ENCODE measurements at regions of chr14 and their contacts with region 1.

Region 1: DNA sequence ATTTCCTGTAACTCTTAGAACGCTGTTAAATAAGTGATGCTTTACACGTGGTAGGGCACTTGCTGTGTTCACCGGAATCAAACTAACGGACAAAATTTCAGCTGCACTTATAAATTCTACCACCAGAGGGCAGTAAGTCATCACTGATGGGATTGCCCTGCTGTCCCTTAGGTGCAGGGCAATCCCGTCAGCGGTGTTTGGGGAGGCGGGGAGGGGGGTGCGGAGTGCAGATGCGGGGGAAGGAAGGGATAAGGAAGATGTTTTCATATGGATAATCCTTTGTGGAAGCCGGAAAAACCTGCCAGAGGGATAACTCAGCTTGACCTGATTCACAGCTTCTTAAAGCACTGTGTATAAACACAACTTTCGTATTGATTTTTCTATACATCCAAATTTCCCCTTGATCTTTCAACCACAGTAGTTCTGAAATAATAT is 21.7 kb upstream of the SLC10A1 start:
- DNase-seq: peak; percentile 40
- H3K4me3 ChIP-seq: no peak overlapping the region
- H3K27ac ChIP-seq: no peak overlapping the region
- H3K4me1 ChIP-seq: no peaks in the 10 kb centered on the region
- H3K27me3 ChIP-seq: peaks cover 3% of the 10 kb centered on the region
- CTCF ChIP-seq: peak; percentile 79 to 97 (median 86)
- POLR2A ChIP-seq: no peak

Region 2: DNA sequence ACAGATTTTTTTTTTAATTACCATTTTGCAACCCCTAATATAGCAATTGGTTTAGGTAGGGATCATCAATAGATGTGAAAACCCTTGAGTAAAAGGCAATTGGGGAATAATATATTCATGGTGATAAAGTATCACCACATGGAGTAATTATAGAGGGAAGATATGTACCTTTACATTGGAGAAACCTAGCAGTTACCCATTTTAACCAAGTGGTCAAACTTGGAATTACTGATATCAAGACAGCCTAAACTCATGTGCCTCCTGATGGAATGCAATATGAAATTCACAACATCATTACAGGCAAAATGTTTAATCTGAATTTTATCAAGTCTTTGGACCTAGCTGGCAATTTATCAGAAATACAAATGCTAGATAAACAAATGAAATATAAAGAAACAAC is 15.0 kb before region 1 on chr14:
- intact Hi-C with region 1: no loop called
- DNase-seq: no peak
- H3K4me3 ChIP-seq: no peak overlapping the region
- H3K27ac ChIP-seq: no peak overlapping the region
- H3K4me1 ChIP-seq: no peaks in the 10 kb centered on the region
- H3K27me3 ChIP-seq: no peaks in the 10 kb centered on the region
- CTCF ChIP-seq: no peak
- POLR2A ChIP-seq: no peak

Region 3: GRCh38 chr14:69996216-69996615 is 177.4 kb after region 1 on chr14:
- intact Hi-C with region 1: no loop called
- DNase-seq: no peak
- H3K4me3 ChIP-seq: no peak overlapping the region
- H3K27ac ChIP-seq: no peak overlapping the region
- H3K4me1 ChIP-seq: no peaks in the 10 kb centered on the region
- H3K27me3 ChIP-seq: no peaks in the 10 kb centered on the region
- CTCF ChIP-seq: no peak
- POLR2A ChIP-seq: no peak

Region 4: DNA sequence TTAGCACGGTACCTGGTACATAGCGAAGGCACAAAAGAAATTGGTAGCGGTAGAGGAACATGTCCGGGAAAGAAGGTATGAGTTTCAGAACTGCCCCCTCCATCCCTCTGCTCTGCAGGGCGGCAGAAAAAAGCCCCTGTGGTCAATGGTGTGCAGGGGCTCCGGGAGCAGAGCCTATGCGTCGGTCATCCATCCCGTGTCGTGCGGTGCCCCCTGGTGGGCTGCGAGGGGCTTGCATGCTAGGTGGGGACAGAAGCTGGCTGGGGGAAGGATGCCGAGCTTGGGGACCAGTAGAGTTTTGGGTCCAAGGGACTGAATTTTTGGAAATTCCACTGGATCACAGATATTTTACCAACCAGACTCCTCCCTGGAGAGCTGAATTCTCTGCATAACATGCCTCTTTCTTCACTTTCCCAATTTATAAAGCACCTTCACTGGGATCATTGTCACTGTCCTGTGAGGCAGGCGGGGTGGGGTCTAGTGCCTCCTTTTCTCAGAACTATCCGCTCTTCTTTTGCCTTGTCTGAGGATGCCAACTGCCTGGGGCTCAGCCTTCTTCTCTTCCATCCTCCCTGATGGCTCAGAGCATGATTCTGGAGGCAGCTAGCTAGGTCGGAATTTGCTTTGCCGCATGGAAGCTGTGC is 209.1 kb after region 1 on chr14:
- intact Hi-C with region 1: loop called (anchors 2 kb)
- DNase-seq: peak; percentile 46
- H3K4me3 ChIP-seq: no peak overlapping the region
- H3K27ac ChIP-seq: no peak overlapping the region
- H3K4me1 ChIP-seq: no peaks in the 10 kb centered on the region
- H3K27me3 ChIP-seq: no peaks in the 10 kb centered on the region
- CTCF ChIP-seq: peak; percentile 87 to 93 (median 88)
- POLR2A ChIP-seq: no peak

Region 5: DNA sequence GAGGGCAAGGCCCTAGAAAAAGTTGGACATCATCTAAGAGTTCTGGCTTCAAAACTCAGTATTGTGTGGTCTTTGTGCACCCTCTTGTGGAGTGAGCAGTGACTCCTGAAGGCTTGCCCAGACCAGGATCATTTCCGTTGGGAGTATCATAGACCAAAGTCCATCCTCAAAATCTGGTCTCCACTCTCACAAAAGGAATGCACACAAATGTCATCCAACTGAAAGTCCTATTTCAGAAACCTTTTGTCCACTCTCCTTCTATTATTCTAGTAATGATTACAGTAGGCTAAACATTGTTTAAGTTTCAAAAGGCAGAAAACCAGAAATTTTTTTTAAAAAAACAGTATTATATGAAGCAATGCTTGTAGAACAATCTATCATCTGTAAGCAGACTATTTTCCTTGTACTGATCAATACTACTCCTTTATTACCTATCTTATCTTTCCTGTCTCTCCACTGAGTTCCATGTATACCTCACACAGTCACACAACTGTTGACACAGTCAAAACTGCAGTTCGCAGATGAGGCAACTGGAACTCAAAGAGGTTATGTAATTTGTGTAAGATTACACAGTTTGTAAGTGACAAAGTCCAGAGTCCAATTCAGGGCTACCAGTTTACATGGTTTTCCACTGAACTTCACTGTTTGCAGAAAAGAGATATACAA is 499.3 kb after region 1 on chr14:
- intact Hi-C with region 1: loop called (anchors 5 kb)
- DNase-seq: no peak
- H3K4me3 ChIP-seq: no peak overlapping the region
- H3K27ac ChIP-seq: no peak overlapping the region
- H3K4me1 ChIP-seq: no peaks in the 10 kb centered on the region
- H3K27me3 ChIP-seq: no peaks in the 10 kb centered on the region
- CTCF ChIP-seq: peak in 3 of 4 experiments; percentile 26 to 60 (median 33)
- POLR2A ChIP-seq: no peak